ENCODE measurements at regions of chr12 and their contacts with region 1.

Region 1: DNA sequence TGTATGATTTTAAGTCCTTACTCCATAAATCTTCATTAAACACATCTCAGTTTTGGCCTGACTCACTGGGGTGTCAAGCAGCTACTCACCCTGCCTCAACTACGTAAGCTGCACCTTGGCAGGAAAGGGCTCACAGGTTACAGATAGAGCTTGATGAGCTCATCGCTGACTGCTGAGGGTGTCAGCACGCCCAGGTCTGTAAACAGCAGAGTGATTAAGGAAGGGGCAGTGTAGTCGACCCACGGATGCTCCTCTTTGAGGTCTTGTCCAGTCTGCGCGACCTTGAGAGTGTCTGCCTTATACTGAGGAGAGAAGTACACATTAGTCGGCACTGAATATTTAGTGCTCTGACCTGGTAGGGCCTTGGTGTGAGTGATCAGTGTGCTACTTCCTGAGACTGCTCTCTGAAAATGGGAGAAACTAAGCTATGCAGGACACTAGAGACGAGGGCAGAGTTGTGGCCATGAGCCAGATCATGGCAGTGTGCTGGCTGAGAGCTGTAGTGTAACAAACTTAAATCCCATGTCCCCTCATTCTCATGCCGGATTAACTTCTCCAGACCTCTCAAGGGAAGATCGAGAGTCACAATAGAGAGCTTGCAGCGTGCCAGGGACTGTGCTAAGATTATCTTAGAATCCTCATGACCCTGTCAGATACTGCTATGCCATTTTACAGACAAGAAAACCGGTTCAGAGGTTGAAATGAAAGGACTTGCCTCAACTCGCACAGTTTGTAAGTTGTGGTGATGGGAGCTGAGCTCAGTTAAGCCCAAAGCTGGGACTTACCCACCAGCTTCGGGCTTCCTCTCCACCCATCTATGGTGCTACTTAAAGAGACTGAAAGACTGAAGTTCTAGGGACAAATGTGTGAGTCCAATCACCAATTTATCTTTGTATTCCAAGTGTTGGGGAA is 11.6 kb downstream of the EIF2B1 start:
- DNase-seq: no peak
- ATAC-seq: no peak
- H3K4me3 ChIP-seq: no peak overlapping the region
- H3K27ac ChIP-seq: no peak overlapping the region
- H3K4me1 ChIP-seq: no peaks in the 10 kb centered on the region
- H3K27me3 ChIP-seq: no peaks in the 10 kb centered on the region
- CTCF ChIP-seq: no peak
- EP300 ChIP-seq: no peak
- POLR2A ChIP-seq: peak; percentile 70
- RAD21 ChIP-seq: no peak

Region 2: DNA sequence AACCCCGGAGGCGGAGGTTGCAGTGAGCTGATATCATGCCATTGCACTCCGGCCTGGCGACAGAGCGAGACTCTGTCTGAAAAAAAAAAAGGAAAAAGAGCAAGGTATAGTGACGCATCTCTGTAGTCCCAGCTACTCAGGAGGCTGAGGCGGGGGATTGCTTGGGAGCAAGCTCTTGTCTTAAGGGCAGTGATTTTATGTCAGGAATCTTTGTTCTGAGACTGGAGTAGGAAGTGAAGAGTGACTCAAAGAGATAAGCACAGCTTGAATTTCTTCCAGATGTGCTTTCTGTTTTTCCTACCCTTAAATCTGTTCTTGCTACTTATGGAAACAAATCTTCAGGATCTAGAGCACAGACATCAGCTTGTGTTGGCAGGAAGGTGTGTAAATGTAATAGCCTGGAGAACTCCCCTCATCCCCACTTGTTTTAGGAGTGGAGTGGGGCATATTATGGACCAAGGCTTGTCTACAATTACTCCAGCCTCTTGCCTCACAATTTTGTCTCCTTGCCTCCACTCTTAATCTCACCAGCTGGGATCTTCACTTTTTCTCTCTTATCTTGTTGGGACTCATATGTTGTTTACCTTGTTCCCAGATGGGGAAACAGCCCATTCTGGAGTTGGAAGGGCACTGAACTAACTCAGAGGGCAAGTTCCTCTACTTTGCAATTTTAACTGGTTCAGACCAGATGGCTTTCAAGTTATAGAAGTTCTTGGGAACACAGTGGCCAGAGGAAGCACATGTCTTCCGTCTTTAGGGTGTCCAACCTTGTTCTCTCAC is 30.0 kb before region 1 on chr12:
- CTCF ChIA-PET with region 1: interaction called, 10 read pairs
- POLR2A ChIA-PET with region 1: interaction called, 3 read pairs
- RAD21 ChIA-PET with region 1: no interaction called
- SMC1A ChIA-PET with region 1: interaction called, 4 read pairs
- in situ Hi-C with region 1: no loop called
- intact Hi-C with region 1: no loop called
- DNase-seq: no peak
- ATAC-seq: no peak
- H3K4me3 ChIP-seq: no peak overlapping the region
- H3K27ac ChIP-seq: no peak overlapping the region
- H3K4me1 ChIP-seq: peaks cover 3% of the 10 kb centered on the region; the same call in 1 of the 2 replicates
- H3K27me3 ChIP-seq: no peaks in the 10 kb centered on the region
- CTCF ChIP-seq: no peak
- EP300 ChIP-seq: no peak
- POLR2A ChIP-seq: no peak
- RAD21 ChIP-seq: no peak

Region 3: GRCh38 chr12:123601602-123602489 is 20.0 kb before region 1 on chr12 and contains the start of gene DDX55:
- CTCF ChIA-PET with region 1: interaction called, 21 read pairs
- POLR2A ChIA-PET with region 1: interaction called, 9 read pairs
- RAD21 ChIA-PET with region 1: interaction called, 4 read pairs
- SMC1A ChIA-PET with region 1: interaction called, 6 read pairs
- in situ Hi-C with region 1: no loop called
- intact Hi-C with region 1: no loop called
- DNase-seq: peak; percentile 23
- ATAC-seq: peak; percentile 95
- H3K4me3 ChIP-seq: peak within 1 kb of the TSS; percentile 80
- H3K27ac ChIP-seq: peak within 1 kb of the TSS; percentile 92
- H3K4me1 ChIP-seq: peaks cover 4% of the 10 kb centered on the region; the same call in 1 of the 2 replicates
- H3K27me3 ChIP-seq: no peaks in the 10 kb centered on the region
- CTCF ChIP-seq: peak; percentile 23 to 54 (median 31); a peak in 4 of 6 replicates
- EP300 ChIP-seq: no peak
- POLR2A ChIP-seq: peak; percentile 99
- RAD21 ChIP-seq: peak; percentile 43
- polyA plus RNA-seq, gene DDX55: 4.5 to 8.9 TPM